ENCODE measurements at regions of chr7 and their contacts with region 1.

Region 1: GRCh38 chr7:101287032-101287431 is 34.6 kb downstream of the IFT22 start:
- DNase-seq: no peak
- ATAC-seq: no peak
- H3K4me3 ChIP-seq: no peak overlapping the region
- H3K27ac ChIP-seq: no peak overlapping the region
- H3K4me1 ChIP-seq: peaks cover 0 to 4% (median 0%) of the 10 kb centered on the region in 9 donors
- H3K27me3 ChIP-seq: peaks cover 0 to 39% (median 16%) of the 10 kb centered on the region in 7 donors
- CTCF ChIP-seq: no peak

Region 2: DNA sequence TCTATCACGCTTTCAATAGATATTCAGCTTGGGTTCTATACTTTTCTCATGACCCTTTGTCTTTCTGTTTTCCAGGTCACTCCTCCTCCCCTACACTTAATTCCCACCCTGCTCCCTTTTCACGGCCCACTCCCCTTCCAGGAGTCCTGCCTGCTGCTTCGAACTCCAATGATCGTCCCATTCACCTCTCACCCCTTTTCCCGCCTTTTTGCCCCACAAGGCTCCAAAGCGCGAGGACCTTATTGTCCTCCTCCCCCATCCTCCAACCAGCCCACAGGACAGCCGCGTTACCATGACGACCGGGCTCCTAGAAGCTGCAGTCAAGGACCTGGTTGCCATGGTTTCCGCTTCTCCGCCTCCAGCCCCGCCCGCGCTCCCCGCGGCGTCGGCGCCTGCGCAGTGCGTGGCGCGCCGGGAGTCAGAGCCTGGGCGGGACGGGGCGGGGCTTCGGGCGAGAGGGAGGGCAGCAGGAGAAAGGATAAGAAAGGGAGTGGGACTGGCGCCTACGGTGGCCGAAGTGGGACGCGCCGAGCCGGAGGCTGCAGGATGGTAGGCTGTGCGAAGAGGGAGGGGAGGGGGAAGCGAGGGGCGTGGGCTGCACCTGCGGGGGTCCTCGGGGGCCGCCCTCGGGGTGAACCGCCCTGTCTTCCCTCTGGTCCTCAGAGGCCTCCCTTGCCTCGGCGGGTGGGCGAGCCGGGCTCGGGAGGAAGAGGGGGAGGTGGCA is 132.9 kb before region 1 on chr7 and contains the start of gene AP1S1:
- intact Hi-C with region 1: loop called in 1 of 10 experiments (anchors 5 kb)
- DNase-seq: peak; percentile 94 to 96
- ATAC-seq: peak; percentile 95 to 98 (median 97)
- H3K4me3 ChIP-seq: peak within 1 kb of the TSS; percentile 63 to 99 (median 84)
- H3K27ac ChIP-seq: peak within 1 kb of the TSS in 6 of 10 donors; percentile 22 to 77 (median 40)
- H3K4me1 ChIP-seq: peaks cover 3 to 20% (median 10%) of the 10 kb centered on the region in 9 donors
- H3K27me3 ChIP-seq: peaks cover 0 to 10% (median 3%) of the 10 kb centered on the region in 7 donors
- CTCF ChIP-seq: no peak
- total RNA-seq, gene AP1S1: 7.8 to 15.2 (median 11.2) TPM

Region 3: GRCh38 chr7:101169838-101170551 is 117.0 kb before region 1 on chr7:
- intact Hi-C with region 1: loop called in 1 of 10 experiments (anchors 10 kb)
- DNase-seq: peak; percentile 63 to 75
- ATAC-seq: peak in 7 of 8 donors; percentile 21 to 45 (median 32)
- H3K4me3 ChIP-seq: no peak overlapping the region
- H3K27ac ChIP-seq: no peak overlapping the region
- H3K4me1 ChIP-seq: peaks cover 15 to 52% (median 31%) of the 10 kb centered on the region in 9 donors
- H3K27me3 ChIP-seq: peaks cover 58 to 100% (median 100%) of the 10 kb centered on the region in 7 donors
- CTCF ChIP-seq: peak; percentile 76 to 91 (median 87)

Region 4: DNA sequence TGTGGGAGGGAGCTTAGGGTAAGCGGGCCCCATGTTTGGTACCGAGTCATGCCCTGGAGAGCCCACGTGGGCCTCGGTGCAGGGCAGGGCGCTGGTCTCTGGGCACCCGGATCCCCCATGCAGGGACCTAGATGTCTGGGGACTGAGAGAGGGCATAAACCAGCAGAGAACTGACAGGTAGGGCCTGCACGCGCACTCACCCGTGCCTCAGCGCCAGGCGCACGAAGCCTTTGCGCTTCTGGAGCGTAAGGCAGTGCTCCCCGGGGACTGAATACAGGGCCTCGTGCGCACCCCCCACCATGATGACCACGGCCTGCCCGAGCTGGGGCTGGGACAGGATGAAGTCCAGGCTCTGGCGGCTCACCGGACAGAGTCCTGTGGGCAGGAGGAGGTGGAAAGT is 89.0 kb before region 1 on chr7:
- intact Hi-C with region 1: loop called in 3 of 10 experiments (anchors 2 to 10 kb)
- DNase-seq: no peak
- ATAC-seq: no peak
- H3K4me3 ChIP-seq: no peak overlapping the region
- H3K27ac ChIP-seq: no peak overlapping the region
- H3K4me1 ChIP-seq: peaks cover 4 to 14% (median 9%) of the 10 kb centered on the region in 9 donors
- H3K27me3 ChIP-seq: peaks cover 25 to 84% (median 76%) of the 10 kb centered on the region in 7 donors
- CTCF ChIP-seq: no peak

Measured in heart right ventricle (tissue), 16 donors.